ENCODE measurements at regions of chr9 and their contacts with region 1.

Region 1: GRCh38 chr9:26892251-26893029 is at the start of gene CAAP1:
- DNase-seq: peak; percentile 98
- ATAC-seq: peak; percentile 92
- H3K4me3 Mint-ChIP-seq: peak within 1 kb of the TSS; percentile 100
- H3K27ac Mint-ChIP-seq: peak within 1 kb of the TSS; percentile 100
- H3K4me1 Mint-ChIP-seq: peaks cover 36% of the 10 kb centered on the region
- H3K27me3 Mint-ChIP-seq: no peaks in the 10 kb centered on the region
- total RNA-seq, gene CAAP1: 17.1 to 21.4 TPM

Region 2: GRCh38 chr9:26502311-26502710 is 390.1 kb before region 1 on chr9:
- CTCF ChIA-PET with region 1: no interaction called
- POLR2A ChIA-PET with region 1: no interaction called
- intact Hi-C with region 1: no loop called
- DNase-seq: no peak
- ATAC-seq: no peak
- H3K4me3 Mint-ChIP-seq: no peak overlapping the region
- H3K27ac Mint-ChIP-seq: no peak overlapping the region
- H3K4me1 Mint-ChIP-seq: no peaks in the 10 kb centered on the region
- H3K27me3 Mint-ChIP-seq: no peaks in the 10 kb centered on the region

Region 3: DNA sequence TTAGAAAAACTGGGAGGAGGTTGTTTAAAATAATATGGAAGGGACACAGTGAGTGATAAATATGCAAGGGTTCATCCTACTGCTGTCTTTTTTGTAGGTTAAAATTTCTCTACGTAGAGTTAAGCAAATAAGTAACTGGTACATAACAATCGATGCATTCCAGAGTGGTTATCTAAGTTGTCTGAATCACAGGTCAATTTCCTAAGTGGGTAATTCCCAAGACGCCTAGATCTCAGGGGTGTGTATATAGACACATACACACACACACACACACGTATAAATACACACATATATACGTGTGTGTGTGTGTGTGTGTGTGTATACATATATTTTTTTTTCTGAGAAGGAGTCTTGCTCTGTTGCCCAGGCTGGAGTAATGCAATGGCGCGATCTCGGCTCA is 22.1 kb before region 1 on chr9:
- CTCF ChIA-PET with region 1: interaction called, 3 read pairs
- POLR2A ChIA-PET with region 1: no interaction called
- intact Hi-C with region 1: loop called in 1 of 2 experiments (anchors 2 kb)
- DNase-seq: no peak
- ATAC-seq: no peak
- H3K4me3 Mint-ChIP-seq: no peak overlapping the region
- H3K27ac Mint-ChIP-seq: no peak overlapping the region
- H3K4me1 Mint-ChIP-seq: no peaks in the 10 kb centered on the region
- H3K27me3 Mint-ChIP-seq: no peaks in the 10 kb centered on the region

Region 4: DNA sequence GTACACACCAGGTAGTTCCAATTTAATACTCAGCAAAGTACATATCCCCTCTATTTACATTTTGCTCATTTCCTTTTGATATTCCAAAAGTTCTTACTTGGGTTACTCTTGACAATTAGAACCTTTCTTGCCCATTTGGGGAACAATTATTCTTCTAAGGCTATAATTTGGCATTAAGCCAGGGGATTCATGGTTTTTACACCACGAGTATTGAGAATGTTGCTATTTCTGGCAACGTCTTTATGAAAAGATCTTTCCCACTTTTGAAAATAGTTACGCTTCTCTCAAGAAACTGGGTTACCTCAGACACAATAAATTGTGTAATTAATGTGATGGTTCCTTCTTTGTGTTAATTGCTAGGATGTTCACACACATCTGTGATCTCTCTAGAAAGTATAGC is 11.6 kb after region 1 on chr9:
- CTCF ChIA-PET with region 1: no interaction called
- POLR2A ChIA-PET with region 1: no interaction called
- intact Hi-C with region 1: no loop called
- DNase-seq: no peak
- ATAC-seq: no peak
- H3K4me3 Mint-ChIP-seq: no peak overlapping the region
- H3K27ac Mint-ChIP-seq: no peak overlapping the region
- H3K4me1 Mint-ChIP-seq: no peaks in the 10 kb centered on the region
- H3K27me3 Mint-ChIP-seq: no peaks in the 10 kb centered on the region

Region 5: GRCh38 chr9:26946753-26947727 is 54.6 kb after region 1 on chr9 and contains the start of gene PLAA:
- CTCF ChIA-PET with region 1: interaction called, 3 read pairs
- POLR2A ChIA-PET with region 1: interaction called, 3 read pairs
- intact Hi-C with region 1: loop called (anchors 1 kb)
- DNase-seq: peak; percentile 93
- ATAC-seq: peak; percentile 96
- H3K4me3 Mint-ChIP-seq: peak within 1 kb of the TSS; percentile 88
- H3K27ac Mint-ChIP-seq: peak within 1 kb of the TSS; percentile 99
- H3K4me1 Mint-ChIP-seq: peaks cover 48% of the 10 kb centered on the region
- H3K27me3 Mint-ChIP-seq: peaks cover 3% of the 10 kb centered on the region
- total RNA-seq, gene PLAA: 30.9 to 36.5 TPM

Region 6: GRCh38 chr9:26955921-26956859 is 63.8 kb after region 1 on chr9 and contains the start of gene IFT74:
- CTCF ChIA-PET with region 1: interaction called, 3 read pairs
- POLR2A ChIA-PET with region 1: interaction called, 13 read pairs
- intact Hi-C with region 1: loop called (anchors 1 kb)
- DNase-seq: peak; percentile 96
- ATAC-seq: peak; percentile 99
- H3K4me3 Mint-ChIP-seq: peak within 1 kb of the TSS; percentile 88
- H3K27ac Mint-ChIP-seq: peak within 1 kb of the TSS; percentile 85
- H3K4me1 Mint-ChIP-seq: peaks cover 32% of the 10 kb centered on the region
- H3K27me3 Mint-ChIP-seq: no peaks in the 10 kb centered on the region
- total RNA-seq, gene IFT74: 10.5 to 11.6 TPM

Region 7: GRCh38 chr9:27276193-27277030 is 384.0 kb after region 1 on chr9:
- CTCF ChIA-PET with region 1: no interaction called
- POLR2A ChIA-PET with region 1: no interaction called
- intact Hi-C with region 1: loop called in 1 of 2 experiments (anchors 10 kb)
- DNase-seq: peak; percentile 9
- ATAC-seq: no peak
- H3K4me3 Mint-ChIP-seq: no peak overlapping the region
- H3K27ac Mint-ChIP-seq: no peak overlapping the region
- H3K4me1 Mint-ChIP-seq: no peaks in the 10 kb centered on the region
- H3K27me3 Mint-ChIP-seq: peaks cover 2% of the 10 kb centered on the region

Region 8: GRCh38 chr9:27365707-27366376 is 473.4 kb after region 1 on chr9:
- CTCF ChIA-PET with region 1: no interaction called
- POLR2A ChIA-PET with region 1: no interaction called
- intact Hi-C with region 1: loop called in 1 of 2 experiments (anchors 1 kb)
- DNase-seq: peak; percentile 82
- ATAC-seq: peak; percentile 99
- H3K4me3 Mint-ChIP-seq: peak overlapping the region; percentile 30
- H3K27ac Mint-ChIP-seq: peak overlapping the region; percentile 58
- H3K4me1 Mint-ChIP-seq: peaks cover 35% of the 10 kb centered on the region
- H3K27me3 Mint-ChIP-seq: peaks cover 15% of the 10 kb centered on the region

Measured in activated CD4-positive, alpha-beta T cell treated with anti-CD3 and anti-CD28 coated beads for 36 hours (primary cell).